HEK293T (cell line): ENCODE measurements at regions of chr3 and their contacts with region 1.

Region 1: GRCh38 chr3:15572138-15572537 is 29.2 kb downstream of the HACL1 start:
- DNase-seq: no peak

Region 2: DNA sequence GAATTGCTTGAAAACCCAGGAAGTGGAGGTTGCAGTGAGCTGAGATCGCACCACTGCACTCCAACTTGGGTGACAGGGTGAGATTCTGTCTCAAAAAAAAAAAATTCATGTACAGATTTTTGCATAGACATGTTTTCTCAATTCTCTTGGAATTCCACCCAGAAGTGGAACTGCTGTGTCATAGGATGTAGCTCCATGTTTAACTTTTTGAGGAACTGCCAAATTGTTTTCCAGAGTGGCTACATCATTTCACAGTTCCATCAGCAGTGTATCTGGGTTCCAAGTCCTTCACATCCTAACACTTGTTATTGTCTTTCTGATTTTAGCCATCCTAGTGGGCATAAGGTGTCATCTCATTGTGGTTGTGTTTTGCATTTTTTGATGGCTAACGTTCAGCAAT is 356.1 kb before region 1 on chr3:
- CTCF ChIA-PET with region 1: interaction called, 10 read pairs
- POLR2A ChIA-PET with region 1: no interaction called
- DNase-seq: no peak